ENCODE measurements at regions of chr11 and their contacts with region 1.

Region 1: DNA sequence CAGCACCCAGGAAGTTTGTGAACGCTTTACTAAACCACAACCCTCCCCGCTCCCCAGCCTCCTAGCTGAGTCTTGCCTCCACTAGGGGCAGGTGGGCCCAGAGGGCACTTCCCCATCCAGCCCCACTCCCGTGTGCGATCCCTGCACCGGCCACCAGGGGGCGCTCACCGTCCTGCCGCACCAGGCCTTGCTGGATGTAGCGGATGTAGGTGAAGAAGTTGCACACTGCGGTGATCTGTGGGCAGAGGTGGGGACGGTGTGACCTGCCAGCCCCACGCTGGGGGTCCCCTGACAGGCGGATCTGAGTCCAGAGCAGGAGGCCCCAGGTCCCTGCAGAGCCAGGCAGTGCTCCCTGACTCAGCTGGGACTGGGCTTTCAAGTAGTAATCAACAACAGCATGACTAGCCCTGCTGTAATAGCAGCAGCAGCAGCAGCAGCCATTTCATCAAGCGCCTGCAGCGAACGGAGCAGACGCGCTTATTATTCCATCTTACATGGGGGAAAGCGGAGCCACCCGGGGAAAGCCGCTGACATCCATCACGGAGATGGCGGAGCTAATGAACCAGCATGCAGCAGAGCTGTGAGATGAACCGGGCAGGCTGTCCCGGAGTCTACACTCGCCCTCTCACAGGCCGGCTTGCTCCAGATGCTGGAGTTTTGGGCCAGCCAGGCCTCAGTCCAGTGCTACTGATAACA is 7.9 kb upstream of the FADS3 start:
- DNase-seq: peak; percentile 87 to 97 (median 93)
- ATAC-seq: peak; percentile 98
- H3K4me3 ChIP-seq: no peak overlapping the region
- H3K4me3 Mint-ChIP-seq: no peak overlapping the region
- H3K27ac ChIP-seq: no peak overlapping the region
- H3K27ac Mint-ChIP-seq: no peak overlapping the region
- H3K4me1 ChIP-seq: peaks cover 9% of the 10 kb centered on the region
- H3K4me1 Mint-ChIP-seq: peaks cover 6% of the 10 kb centered on the region
- H3K27me3 ChIP-seq: no peaks in the 10 kb centered on the region
- H3K27me3 Mint-ChIP-seq: no peaks in the 10 kb centered on the region
- CTCF ChIP-seq: peak; percentile 98

Region 2: DNA sequence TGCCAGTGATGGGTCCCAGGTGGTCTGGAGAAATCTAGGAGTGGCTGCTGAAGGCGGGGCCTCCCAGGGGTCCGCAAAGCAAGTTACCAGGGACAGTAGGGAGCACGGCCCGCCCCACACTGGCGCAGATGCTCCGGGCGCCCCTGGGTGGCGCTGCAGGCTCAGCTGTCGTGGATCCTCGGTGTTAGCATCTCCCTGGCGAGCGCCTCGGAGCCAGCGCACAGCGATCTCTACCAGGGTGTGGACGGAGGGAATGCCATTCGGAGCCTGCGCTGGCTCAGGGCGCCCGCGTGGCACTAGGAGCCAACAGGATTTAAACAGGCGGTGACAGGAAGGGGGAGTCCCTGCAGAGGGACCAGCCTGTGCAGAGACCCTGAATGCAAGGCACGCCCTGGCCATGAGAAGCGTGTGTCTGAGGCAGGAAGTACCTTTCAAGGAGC is 28.1 kb before region 1 on chr11:
- CTCF ChIA-PET with region 1: interaction called, 10 read pairs
- POLR2A ChIA-PET with region 1: no interaction called
- intact Hi-C with region 1: no loop called
- DNase-seq: peak; percentile 38 to 79 (median 50)
- ATAC-seq: peak; percentile 97
- H3K4me3 ChIP-seq: no peak overlapping the region
- H3K4me3 Mint-ChIP-seq: peak overlapping the region; percentile 13
- H3K27ac ChIP-seq: no peak overlapping the region
- H3K27ac Mint-ChIP-seq: no peak overlapping the region
- H3K4me1 ChIP-seq: peaks cover 7% of the 10 kb centered on the region
- H3K4me1 Mint-ChIP-seq: peaks cover 5% of the 10 kb centered on the region
- H3K27me3 ChIP-seq: no peaks in the 10 kb centered on the region
- H3K27me3 Mint-ChIP-seq: peaks cover 7% of the 10 kb centered on the region
- CTCF ChIP-seq: peak; percentile 57

Region 3: GRCh38 chr11:62025487-62026105 is 126.3 kb after region 1 on chr11:
- CTCF ChIA-PET with region 1: interaction called, 18 read pairs
- POLR2A ChIA-PET with region 1: interaction called, 3 read pairs
- intact Hi-C with region 1: no loop called
- DNase-seq: peak; percentile 45 to 98 (median 72)
- ATAC-seq: peak; percentile 84
- H3K4me3 ChIP-seq: peak overlapping the region; percentile 9
- H3K4me3 Mint-ChIP-seq: peak overlapping the region; percentile 43
- H3K27ac ChIP-seq: peak overlapping the region; percentile 85 to 98
- H3K27ac Mint-ChIP-seq: peak overlapping the region; percentile 95
- H3K4me1 ChIP-seq: peaks cover 33% of the 10 kb centered on the region
- H3K4me1 Mint-ChIP-seq: peaks cover 29% of the 10 kb centered on the region
- H3K27me3 ChIP-seq: no peaks in the 10 kb centered on the region
- H3K27me3 Mint-ChIP-seq: no peaks in the 10 kb centered on the region
- CTCF ChIP-seq: no peak

Region 4: GRCh38 chr11:62081378-62082291 is 182.3 kb after region 1 on chr11:
- CTCF ChIA-PET with region 1: interaction called, 207 read pairs
- POLR2A ChIA-PET with region 1: interaction called, 12 read pairs
- intact Hi-C with region 1: loop called (anchors 1 kb)
- DNase-seq: peak; percentile 66 to 89 (median 80)
- ATAC-seq: peak; percentile 93
- H3K4me3 ChIP-seq: no peak overlapping the region
- H3K4me3 Mint-ChIP-seq: peak overlapping the region; percentile 2
- H3K27ac ChIP-seq: no peak overlapping the region
- H3K27ac Mint-ChIP-seq: no peak overlapping the region
- H3K4me1 ChIP-seq: peaks cover 9% of the 10 kb centered on the region
- H3K4me1 Mint-ChIP-seq: peaks cover 8% of the 10 kb centered on the region
- H3K27me3 ChIP-seq: no peaks in the 10 kb centered on the region
- H3K27me3 Mint-ChIP-seq: no peaks in the 10 kb centered on the region
- CTCF ChIP-seq: peak; percentile 96

Region 5: DNA sequence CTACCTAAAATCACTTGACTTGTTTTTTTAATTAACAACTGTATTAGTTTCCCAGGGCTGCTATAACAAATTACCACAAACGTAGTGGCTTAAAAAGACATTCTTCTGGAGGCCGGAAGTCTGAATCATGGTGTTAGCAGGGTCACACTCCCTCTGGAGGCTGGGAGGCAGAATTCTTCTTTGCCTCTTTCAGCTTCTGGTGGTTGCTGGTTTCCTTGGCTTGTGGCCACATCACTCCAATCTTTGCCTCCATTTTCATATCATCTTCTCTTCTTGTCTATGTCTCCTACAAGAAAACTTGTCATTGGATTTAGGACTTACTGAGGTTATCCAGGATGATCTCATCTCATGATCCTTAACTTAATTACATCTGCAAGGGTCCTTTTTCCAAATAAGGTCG is 217.2 kb after region 1 on chr11:
- CTCF ChIA-PET with region 1: interaction called, 132 read pairs
- POLR2A ChIA-PET with region 1: no interaction called
- intact Hi-C with region 1: no loop called
- DNase-seq: no peak
- ATAC-seq: no peak
- H3K4me3 ChIP-seq: no peak overlapping the region
- H3K4me3 Mint-ChIP-seq: no peak overlapping the region
- H3K27ac ChIP-seq: no peak overlapping the region
- H3K27ac Mint-ChIP-seq: no peak overlapping the region
- H3K4me1 ChIP-seq: peaks cover 11% of the 10 kb centered on the region
- H3K4me1 Mint-ChIP-seq: no peaks in the 10 kb centered on the region
- H3K27me3 ChIP-seq: no peaks in the 10 kb centered on the region
- H3K27me3 Mint-ChIP-seq: no peaks in the 10 kb centered on the region
- CTCF ChIP-seq: no peak